CD4-positive, alpha-beta memory T cell (primary cell): ENCODE measurements at regions of chr6 and their contacts with region 1.

Region 1: DNA sequence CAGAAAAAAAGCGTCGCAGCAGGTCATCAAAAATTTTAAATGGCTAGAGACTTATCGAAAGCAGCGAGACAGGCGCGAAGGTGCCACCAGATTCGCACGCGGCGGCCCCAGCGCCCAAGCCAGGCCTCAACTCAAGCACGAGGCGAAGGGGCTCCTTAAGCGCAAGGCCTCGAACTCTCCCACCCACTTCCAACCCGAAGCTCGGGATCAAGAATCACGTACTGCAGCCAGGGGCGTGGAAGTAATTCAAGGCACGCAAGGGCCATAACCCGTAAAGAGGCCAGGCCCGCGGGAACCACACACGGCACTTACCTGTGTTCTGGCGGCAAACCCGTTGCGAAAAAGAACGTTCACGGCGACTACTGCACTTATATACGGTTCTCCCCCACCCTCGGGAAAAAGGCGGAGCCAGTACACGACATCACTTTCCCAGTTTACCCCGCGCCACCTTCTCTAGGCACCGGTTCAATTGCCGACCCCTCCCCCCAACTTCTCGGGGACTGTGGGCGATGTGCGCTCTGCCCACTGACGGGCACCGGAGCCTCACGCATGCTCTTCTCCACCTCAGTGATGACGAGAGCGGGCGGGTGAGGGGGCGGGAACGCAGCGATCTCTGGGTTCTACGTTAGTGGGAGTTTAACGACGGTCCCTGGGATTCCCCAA is at the start of gene EEF1A1:
- DNase-seq: peak; percentile 98 to 100 (median 99)
- H3K4me3 ChIP-seq: peak within 1 kb of the TSS; percentile 68 to 93
- H3K4me3 Mint-ChIP-seq: peak within 1 kb of the TSS; percentile 95 to 98 (median 96)
- H3K27ac ChIP-seq: peak within 1 kb of the TSS; percentile 100
- H3K27ac Mint-ChIP-seq: peak within 1 kb of the TSS; percentile 98 to 99 (median 98)
- H3K4me1 ChIP-seq: peaks cover 60% of the 10 kb centered on the region
- H3K4me1 Mint-ChIP-seq: peaks cover 39 to 81% (median 54%) of the 10 kb centered on the region in 4 donors
- H3K27me3 ChIP-seq: no peaks in the 10 kb centered on the region
- H3K27me3 Mint-ChIP-seq: no peaks in the 10 kb centered on the region
- total RNA-seq, gene EEF1A1: 15,632 to 16,691 TPM

Region 2: GRCh38 chr6:73152966-73153757 is 367.7 kb before region 1 on chr6:
- CTCF ChIA-PET with region 1: no interaction called
- POLR2A ChIA-PET with region 1: no interaction called
- intact Hi-C with region 1: no loop called
- DNase-seq: no peak
- H3K4me3 ChIP-seq: no peak overlapping the region
- H3K4me3 Mint-ChIP-seq: no peak overlapping the region
- H3K27ac ChIP-seq: no peak overlapping the region
- H3K27ac Mint-ChIP-seq: no peak overlapping the region
- H3K4me1 ChIP-seq: no peaks in the 10 kb centered on the region
- H3K4me1 Mint-ChIP-seq: peaks cover 0 to 1% (median 0%) of the 10 kb centered on the region in 4 donors
- H3K27me3 ChIP-seq: no peaks in the 10 kb centered on the region
- H3K27me3 Mint-ChIP-seq: peaks cover 2 to 3% of the 10 kb centered on the region in 2 donors

Region 3: GRCh38 chr6:73418081-73418741 is 102.6 kb before region 1 on chr6:
- CTCF ChIA-PET with region 1: interaction called, 3 read pairs
- POLR2A ChIA-PET with region 1: interaction called, 11 read pairs
- intact Hi-C with region 1: no loop called
- DNase-seq: no peak
- H3K4me3 ChIP-seq: no peak overlapping the region
- H3K4me3 Mint-ChIP-seq: peak overlapping the region in 3 of 8 donors; percentile 15 to 61 (median 43)
- H3K27ac ChIP-seq: no peak overlapping the region
- H3K27ac Mint-ChIP-seq: peak overlapping the region; percentile 35 to 90 (median 84)
- H3K4me1 ChIP-seq: peaks cover 26% of the 10 kb centered on the region
- H3K4me1 Mint-ChIP-seq: peaks cover 21 to 29% (median 22%) of the 10 kb centered on the region in 4 donors
- H3K27me3 ChIP-seq: no peaks in the 10 kb centered on the region
- H3K27me3 Mint-ChIP-seq: no peaks in the 10 kb centered on the region

Region 4: GRCh38 chr6:73461537-73462350 is 59.1 kb before region 1 on chr6 and contains the start of gene MTO1:
- CTCF ChIA-PET with region 1: interaction called, 7 read pairs
- POLR2A ChIA-PET with region 1: interaction called, 106 read pairs
- intact Hi-C with region 1: loop called (anchors 1 kb)
- DNase-seq: peak; percentile 83 to 93 (median 84)
- H3K4me3 ChIP-seq: peak within 1 kb of the TSS; percentile 89 to 100
- H3K4me3 Mint-ChIP-seq: peak within 1 kb of the TSS; percentile 95 to 99 (median 97)
- H3K27ac ChIP-seq: peak within 1 kb of the TSS; percentile 91
- H3K27ac Mint-ChIP-seq: peak within 1 kb of the TSS; percentile 95 to 100 (median 98)
- H3K4me1 ChIP-seq: peaks cover 46% of the 10 kb centered on the region
- H3K4me1 Mint-ChIP-seq: peaks cover 25 to 64% (median 44%) of the 10 kb centered on the region in 4 donors
- H3K27me3 ChIP-seq: no peaks in the 10 kb centered on the region
- H3K27me3 Mint-ChIP-seq: no peaks in the 10 kb centered on the region
- total RNA-seq, gene MTO1: 98.9 to 99.8 TPM

Region 5: GRCh38 chr6:73580247-73581149 is 59.7 kb after region 1 on chr6:
- CTCF ChIA-PET with region 1: interaction called, 27 read pairs
- POLR2A ChIA-PET with region 1: interaction called, 233 read pairs
- intact Hi-C with region 1: loop called (anchors 1 kb)
- DNase-seq: peak; percentile 43 to 81 (median 47)
- H3K4me3 ChIP-seq: peak overlapping the region in 1 of 2 donors; percentile 12
- H3K4me3 Mint-ChIP-seq: peak overlapping the region; percentile 70 to 90 (median 84)
- H3K27ac ChIP-seq: peak overlapping the region; percentile 54
- H3K27ac Mint-ChIP-seq: peak overlapping the region; percentile 92 to 98 (median 97)
- H3K4me1 ChIP-seq: peaks cover 29% of the 10 kb centered on the region
- H3K4me1 Mint-ChIP-seq: peaks cover 11 to 33% (median 20%) of the 10 kb centered on the region in 4 donors
- H3K27me3 ChIP-seq: no peaks in the 10 kb centered on the region
- H3K27me3 Mint-ChIP-seq: no peaks in the 10 kb centered on the region

Region 6: DNA sequence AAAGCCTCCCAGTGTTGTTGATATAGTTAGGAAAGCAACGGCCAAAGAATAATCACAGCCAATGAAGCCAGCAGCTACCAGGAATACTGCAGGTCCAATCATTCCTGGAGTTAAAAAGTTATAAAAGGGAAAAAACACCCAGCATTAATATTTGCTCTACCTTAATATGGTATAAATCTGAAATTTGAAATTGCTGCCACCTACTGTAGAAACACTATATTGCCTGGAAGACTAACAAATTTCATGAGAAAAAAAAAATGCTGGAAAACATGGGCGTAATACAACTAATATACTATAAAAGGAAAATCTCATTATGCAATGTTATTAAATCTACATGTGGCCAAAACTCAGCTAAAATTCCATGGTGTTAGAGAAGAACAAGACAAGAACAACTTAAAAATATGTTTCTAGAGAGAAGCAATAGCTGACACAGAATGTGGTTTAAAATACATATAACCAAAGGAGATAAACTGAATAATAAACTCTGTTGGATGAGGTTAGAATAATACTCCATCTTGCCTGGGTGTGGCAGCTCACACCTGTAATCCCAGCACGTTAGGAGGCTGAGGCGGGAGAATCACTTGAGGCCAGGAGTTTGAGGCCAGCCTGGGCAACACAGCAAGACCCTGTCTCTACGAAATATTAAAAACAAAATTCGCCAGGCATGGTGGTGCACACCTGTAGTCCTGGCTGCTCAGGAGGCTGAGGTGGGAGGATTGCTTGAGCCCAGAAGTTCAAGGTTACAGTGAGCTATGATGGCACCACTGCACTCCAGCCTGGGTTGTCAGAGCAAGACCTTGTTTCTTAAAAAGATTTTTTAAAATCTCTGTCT is 89.8 kb after region 1 on chr6:
- CTCF ChIA-PET with region 1: interaction called, 222 read pairs
- POLR2A ChIA-PET with region 1: interaction called, 316 read pairs
- intact Hi-C with region 1: no loop called
- DNase-seq: peak in 4 of 5 donors; percentile 49 to 62 (median 59)
- H3K4me3 ChIP-seq: no peak overlapping the region
- H3K4me3 Mint-ChIP-seq: no peak overlapping the region
- H3K27ac ChIP-seq: no peak overlapping the region
- H3K27ac Mint-ChIP-seq: peak overlapping the region in 5 of 7 donors; percentile 1 to 14 (median 4)
- H3K4me1 ChIP-seq: no peaks in the 10 kb centered on the region
- H3K4me1 Mint-ChIP-seq: peaks cover 0 to 6% (median 4%) of the 10 kb centered on the region in 4 donors
- H3K27me3 ChIP-seq: no peaks in the 10 kb centered on the region
- H3K27me3 Mint-ChIP-seq: no peaks in the 10 kb centered on the region

Region 7: DNA sequence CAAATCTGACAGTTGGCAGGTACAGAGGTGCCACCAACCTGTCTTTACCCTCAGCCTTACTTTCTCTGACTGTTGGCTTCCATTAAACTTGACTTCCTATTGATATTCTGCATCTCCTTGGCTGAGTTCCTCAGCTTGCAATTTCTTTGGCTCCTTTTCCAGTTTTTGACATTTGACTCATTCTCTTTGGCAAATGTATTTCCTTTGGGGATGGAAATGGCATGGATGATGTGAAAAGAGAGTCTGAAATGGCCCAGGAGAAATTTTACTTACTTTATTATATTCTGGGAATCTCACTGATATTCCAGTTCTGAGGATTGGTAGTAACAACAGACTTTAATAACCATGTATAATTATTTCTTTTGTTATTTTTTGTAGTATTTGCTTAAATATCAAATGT is 430.4 kb after region 1 on chr6:
- CTCF ChIA-PET with region 1: no interaction called
- POLR2A ChIA-PET with region 1: no interaction called
- intact Hi-C with region 1: no loop called
- DNase-seq: no peak
- H3K4me3 ChIP-seq: no peak overlapping the region
- H3K4me3 Mint-ChIP-seq: no peak overlapping the region
- H3K27ac ChIP-seq: no peak overlapping the region
- H3K27ac Mint-ChIP-seq: no peak overlapping the region
- H3K4me1 ChIP-seq: no peaks in the 10 kb centered on the region
- H3K4me1 Mint-ChIP-seq: peaks cover 0 to 3% (median 0%) of the 10 kb centered on the region in 4 donors
- H3K27me3 ChIP-seq: no peaks in the 10 kb centered on the region
- H3K27me3 Mint-ChIP-seq: no peaks in the 10 kb centered on the region

Region 8: GRCh38 chr6:75243333-75244062 is 1722.7 kb after region 1 on chr6 and contains the start of gene COX7A2:
- CTCF ChIA-PET with region 1: no interaction called
- POLR2A ChIA-PET with region 1: interaction called, 15 read pairs
- intact Hi-C with region 1: loop called (anchors 5 kb)
- DNase-seq: peak; percentile 84 to 92 (median 87)
- H3K4me3 ChIP-seq: peak within 1 kb of the TSS; percentile 90 to 93
- H3K4me3 Mint-ChIP-seq: peak within 1 kb of the TSS; percentile 96 to 99 (median 98)
- H3K27ac ChIP-seq: peak within 1 kb of the TSS; percentile 96
- H3K27ac Mint-ChIP-seq: peak within 1 kb of the TSS; percentile 91 to 100 (median 99)
- H3K4me1 ChIP-seq: peaks cover 24% of the 10 kb centered on the region
- H3K4me1 Mint-ChIP-seq: peaks cover 14 to 47% (median 24%) of the 10 kb centered on the region in 4 donors
- H3K27me3 ChIP-seq: no peaks in the 10 kb centered on the region
- H3K27me3 Mint-ChIP-seq: peaks cover 4 to 9% of the 10 kb centered on the region in 2 donors
- total RNA-seq, gene COX7A2: 188 to 201 TPM